Naive thymus-derived CD4-positive, alpha-beta T cell (primary cell): ENCODE measurements at regions of chr4 and their contacts with region 1.

Region 1: GRCh38 chr4:165096776-165097175 is 15.9 kb downstream of the TMEM192 start:
- DNase-seq: peak in 3 of 9 donors; percentile 6 to 15 (median 10)
- ATAC-seq: no peak
- H3K4me3 ChIP-seq: no peak overlapping the region
- H3K4me3 Mint-ChIP-seq: no peak overlapping the region
- H3K27ac ChIP-seq: no peak overlapping the region
- H3K27ac Mint-ChIP-seq: peak overlapping the region in 1 of 9 donors; percentile 41
- H3K4me1 ChIP-seq: no peaks in the 10 kb centered on the region
- H3K4me1 Mint-ChIP-seq: peaks cover 0 to 2% (median 0%) of the 10 kb centered on the region in 7 donors
- H3K27me3 ChIP-seq: no peaks in the 10 kb centered on the region
- H3K27me3 Mint-ChIP-seq: no peaks in the 10 kb centered on the region

Region 2: GRCh38 chr4:163484906-163485305 is 1611.9 kb before region 1 on chr4:
- CTCF ChIA-PET with region 1: no interaction called
- POLR2A ChIA-PET with region 1: no interaction called
- intact Hi-C with region 1: loop called in 1 of 2 experiments (anchors 10 kb)
- DNase-seq: peak in 8 of 9 donors; percentile 14 to 50 (median 36)
- ATAC-seq: peak; percentile 74
- H3K4me3 ChIP-seq: no peak overlapping the region
- H3K4me3 Mint-ChIP-seq: no peak overlapping the region
- H3K27ac ChIP-seq: no peak overlapping the region
- H3K27ac Mint-ChIP-seq: no peak overlapping the region
- H3K4me1 ChIP-seq: no peaks in the 10 kb centered on the region
- H3K4me1 Mint-ChIP-seq: peaks cover 0 to 6% (median 0%) of the 10 kb centered on the region in 7 donors
- H3K27me3 ChIP-seq: no peaks in the 10 kb centered on the region
- H3K27me3 Mint-ChIP-seq: peaks cover 4 to 21% (median 10%) of the 10 kb centered on the region in 5 donors

Region 3: DNA sequence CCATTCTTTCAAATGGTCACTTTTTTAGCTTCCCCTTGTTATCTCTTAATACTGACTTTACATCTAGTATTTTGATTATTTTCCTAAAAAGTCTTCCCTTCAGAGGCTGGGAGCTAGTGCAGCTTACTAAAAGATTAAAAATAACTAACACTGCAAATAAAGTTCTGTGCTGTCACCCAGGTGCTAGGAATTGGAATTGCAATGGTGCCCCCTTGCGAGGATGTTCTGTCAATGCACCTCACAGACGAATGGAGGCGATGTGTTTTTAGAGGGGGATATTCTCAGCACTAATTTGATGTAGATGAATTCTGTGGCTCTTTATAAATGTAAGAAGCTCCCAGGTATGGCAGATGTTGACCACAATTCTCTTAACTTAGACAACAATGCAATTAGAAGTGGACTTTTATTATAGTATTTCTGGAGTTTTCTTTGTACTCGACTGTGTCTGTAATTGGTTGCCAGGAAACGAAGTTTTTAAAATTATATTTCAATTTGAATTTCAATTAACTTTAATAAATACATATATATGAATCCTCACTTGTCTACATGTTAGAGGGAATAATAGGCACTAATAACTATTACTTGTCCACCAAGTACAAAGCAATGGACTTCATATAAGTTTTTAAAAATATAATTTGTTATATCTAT is 364.8 kb before region 1 on chr4:
- CTCF ChIA-PET with region 1: no interaction called
- POLR2A ChIA-PET with region 1: no interaction called
- intact Hi-C with region 1: loop called in 1 of 2 experiments (anchors 5 kb)
- DNase-seq: peak; percentile 10 to 46 (median 39)
- ATAC-seq: peak; percentile 58
- H3K4me3 ChIP-seq: no peak overlapping the region
- H3K4me3 Mint-ChIP-seq: no peak overlapping the region
- H3K27ac ChIP-seq: no peak overlapping the region
- H3K27ac Mint-ChIP-seq: no peak overlapping the region
- H3K4me1 ChIP-seq: no peaks in the 10 kb centered on the region
- H3K4me1 Mint-ChIP-seq: peaks cover 0 to 4% (median 0%) of the 10 kb centered on the region in 7 donors
- H3K27me3 ChIP-seq: no peaks in the 10 kb centered on the region
- H3K27me3 Mint-ChIP-seq: peaks cover 10 to 16% (median 15%) of the 10 kb centered on the region in 5 donors

Region 4: DNA sequence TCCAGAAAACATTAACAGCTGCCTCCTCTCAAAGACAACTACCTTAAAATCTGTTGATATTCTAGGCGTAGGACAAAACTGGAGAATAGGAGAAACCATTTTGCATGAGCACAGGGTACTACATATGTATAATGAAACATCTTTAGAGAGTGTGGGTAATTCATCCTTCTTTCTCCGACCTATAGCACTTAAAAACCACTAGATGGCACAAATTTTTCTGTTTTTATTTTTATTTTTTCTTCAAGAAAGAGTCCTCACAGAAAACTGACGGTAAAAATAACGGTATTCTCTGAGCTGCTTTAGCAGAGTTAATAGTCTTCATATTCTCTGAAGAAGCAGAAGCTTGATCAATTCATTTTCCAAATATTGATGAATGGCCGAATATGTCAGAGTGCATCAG is 328.3 kb before region 1 on chr4:
- CTCF ChIA-PET with region 1: interaction called, 3 read pairs
- POLR2A ChIA-PET with region 1: no interaction called
- intact Hi-C with region 1: loop called in 1 of 2 experiments (anchors 2 kb)
- DNase-seq: no peak
- ATAC-seq: no peak
- H3K4me3 ChIP-seq: no peak overlapping the region
- H3K4me3 Mint-ChIP-seq: no peak overlapping the region
- H3K27ac ChIP-seq: no peak overlapping the region
- H3K27ac Mint-ChIP-seq: no peak overlapping the region
- H3K4me1 ChIP-seq: no peaks in the 10 kb centered on the region
- H3K4me1 Mint-ChIP-seq: no peaks in the 10 kb centered on the region
- H3K27me3 ChIP-seq: no peaks in the 10 kb centered on the region
- H3K27me3 Mint-ChIP-seq: peaks cover 7 to 40% (median 20%) of the 10 kb centered on the region in 5 donors

Region 5: GRCh38 chr4:164779811-164780216 is 317.0 kb before region 1 on chr4:
- CTCF ChIA-PET with region 1: interaction called, 10 read pairs
- POLR2A ChIA-PET with region 1: no interaction called
- intact Hi-C with region 1: loop called (anchors 1 kb)
- DNase-seq: peak in 4 of 9 donors; percentile 2 to 18 (median 14)
- ATAC-seq: no peak
- H3K4me3 ChIP-seq: no peak overlapping the region
- H3K4me3 Mint-ChIP-seq: no peak overlapping the region
- H3K27ac ChIP-seq: no peak overlapping the region
- H3K27ac Mint-ChIP-seq: no peak overlapping the region
- H3K4me1 ChIP-seq: no peaks in the 10 kb centered on the region
- H3K4me1 Mint-ChIP-seq: no peaks in the 10 kb centered on the region
- H3K27me3 ChIP-seq: no peaks in the 10 kb centered on the region
- H3K27me3 Mint-ChIP-seq: peaks cover 0 to 2% (median 0%) of the 10 kb centered on the region in 5 donors

Region 6: DNA sequence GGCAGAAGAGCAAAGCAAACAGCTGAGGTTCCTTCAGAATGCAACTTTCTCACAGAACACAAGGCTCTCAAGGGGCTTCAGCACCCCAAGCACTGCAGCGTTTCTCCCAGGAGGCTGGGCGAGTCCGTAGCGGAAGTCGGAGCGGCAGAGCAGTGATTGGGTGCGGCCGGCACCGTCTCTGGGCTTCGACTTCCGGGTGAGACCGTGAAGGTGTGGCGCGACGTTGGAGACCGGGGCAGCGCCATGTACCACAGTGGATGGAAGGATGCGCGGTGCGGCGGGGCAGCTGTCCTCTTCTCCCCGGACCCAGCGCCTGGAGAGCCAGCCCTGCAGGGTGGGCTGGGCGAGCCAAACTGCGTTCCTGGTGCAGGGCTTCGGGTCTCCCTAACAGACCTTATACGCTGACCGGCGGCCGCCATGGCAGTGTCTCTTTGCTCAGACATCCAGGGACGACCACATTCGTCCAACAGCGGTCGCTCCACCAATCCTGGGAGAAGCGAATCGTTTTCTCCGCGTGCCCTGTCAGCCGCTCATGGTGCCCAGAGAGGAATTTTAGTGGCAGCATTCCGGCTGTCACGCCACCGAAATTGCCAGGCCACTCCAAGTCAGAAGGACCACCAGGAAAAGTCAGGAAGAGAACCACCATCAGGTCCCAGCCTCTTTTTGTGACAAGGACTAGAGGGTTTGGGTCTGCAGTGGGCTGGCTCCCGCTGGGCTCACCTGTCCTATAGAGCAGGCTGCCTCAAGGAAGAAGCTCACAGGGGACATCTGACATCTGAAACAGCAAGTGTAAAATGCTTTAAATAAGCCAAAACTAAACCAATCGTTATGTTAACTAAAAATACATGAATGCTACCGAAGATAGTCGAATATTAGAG is 139.8 kb before region 1 on chr4:
- CTCF ChIA-PET with region 1: no interaction called
- POLR2A ChIA-PET with region 1: no interaction called
- intact Hi-C with region 1: loop called in 1 of 2 experiments (anchors 5 kb)
- DNase-seq: peak; percentile 41 to 78 (median 59)
- ATAC-seq: peak; percentile 96
- H3K4me3 ChIP-seq: peak overlapping the region; percentile 69
- H3K4me3 Mint-ChIP-seq: peak overlapping the region; percentile 79 to 94 (median 91)
- H3K27ac ChIP-seq: no peak overlapping the region
- H3K27ac Mint-ChIP-seq: peak overlapping the region; percentile 70 to 88 (median 81)
- H3K4me1 ChIP-seq: no peaks in the 10 kb centered on the region
- H3K4me1 Mint-ChIP-seq: peaks cover 11 to 28% (median 21%) of the 10 kb centered on the region in 7 donors
- H3K27me3 ChIP-seq: no peaks in the 10 kb centered on the region
- H3K27me3 Mint-ChIP-seq: peaks cover 7 to 21% (median 12%) of the 10 kb centered on the region in 5 donors